Activated CD4-positive, alpha-beta T cell treated with anti-CD3 and anti-CD28 coated beads, Interleukin-2, amount 10 ng/mL, durations not matched to agents 24 days and 14 days (primary cell): ENCODE measurements at regions of chr7 and their contacts with region 1.

Region 1: GRCh38 chr7:100586266-100587025 is at the start of gene FBXO24:
- DNase-seq: peak; percentile 100
- H3K4me3 Mint-ChIP-seq: peak within 1 kb of the TSS; percentile 91
- H3K27ac Mint-ChIP-seq: peak within 1 kb of the TSS; percentile 96
- H3K4me1 Mint-ChIP-seq: peaks cover 30% of the 10 kb centered on the region
- H3K27me3 Mint-ChIP-seq: peaks cover 6% of the 10 kb centered on the region
- total RNA-seq, gene FBXO24: 0.38 and 0.42 TPM in 2 replicates

Region 2: DNA sequence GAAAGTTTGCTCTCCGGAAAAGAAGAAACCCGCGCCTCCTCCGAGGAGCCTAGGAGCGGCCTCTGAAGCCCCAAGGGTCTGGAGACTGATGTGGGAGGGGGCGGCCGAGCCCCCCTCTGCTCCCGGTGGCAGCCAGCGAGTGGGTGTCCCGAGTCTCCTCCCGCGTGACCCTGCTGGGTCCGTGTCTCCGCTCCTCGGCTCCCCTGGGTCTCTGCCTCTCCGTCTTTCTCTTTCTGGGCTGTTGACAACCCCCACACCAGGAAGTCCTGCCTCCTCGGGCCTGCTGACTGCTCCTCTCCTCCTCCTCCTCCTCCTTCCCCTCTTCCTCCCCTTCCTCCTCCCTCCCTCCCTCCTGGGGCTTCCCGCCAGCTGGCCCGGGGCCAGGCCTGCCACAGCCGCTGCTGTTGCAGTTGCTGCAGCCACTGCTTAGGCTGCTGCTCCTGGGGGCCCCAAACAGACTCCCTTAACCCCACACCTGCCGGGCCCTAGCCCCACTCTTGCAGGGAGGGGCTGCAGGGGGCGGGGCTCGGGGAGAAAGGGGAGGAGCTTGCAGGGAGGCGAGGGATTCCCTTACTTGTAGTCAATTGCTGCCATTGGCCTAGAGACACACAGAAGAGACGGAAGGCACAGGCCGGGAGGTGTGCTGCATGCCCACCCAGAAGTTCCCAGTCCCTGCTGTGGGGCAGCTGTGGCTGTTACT is 107.3 kb before region 1 on chr7 and contains the start of gene TSC22D4:
- intact Hi-C with region 1: loop called (anchors 1 kb)
- DNase-seq: peak; percentile 96
- H3K4me3 Mint-ChIP-seq: peak within 1 kb of the TSS; percentile 92
- H3K27ac Mint-ChIP-seq: peak within 1 kb of the TSS; percentile 88
- H3K4me1 Mint-ChIP-seq: peaks cover 35% of the 10 kb centered on the region
- H3K27me3 Mint-ChIP-seq: no peaks in the 10 kb centered on the region
- total RNA-seq, gene TSC22D4: 113 and 121 TPM in 2 replicates

Region 3: DNA sequence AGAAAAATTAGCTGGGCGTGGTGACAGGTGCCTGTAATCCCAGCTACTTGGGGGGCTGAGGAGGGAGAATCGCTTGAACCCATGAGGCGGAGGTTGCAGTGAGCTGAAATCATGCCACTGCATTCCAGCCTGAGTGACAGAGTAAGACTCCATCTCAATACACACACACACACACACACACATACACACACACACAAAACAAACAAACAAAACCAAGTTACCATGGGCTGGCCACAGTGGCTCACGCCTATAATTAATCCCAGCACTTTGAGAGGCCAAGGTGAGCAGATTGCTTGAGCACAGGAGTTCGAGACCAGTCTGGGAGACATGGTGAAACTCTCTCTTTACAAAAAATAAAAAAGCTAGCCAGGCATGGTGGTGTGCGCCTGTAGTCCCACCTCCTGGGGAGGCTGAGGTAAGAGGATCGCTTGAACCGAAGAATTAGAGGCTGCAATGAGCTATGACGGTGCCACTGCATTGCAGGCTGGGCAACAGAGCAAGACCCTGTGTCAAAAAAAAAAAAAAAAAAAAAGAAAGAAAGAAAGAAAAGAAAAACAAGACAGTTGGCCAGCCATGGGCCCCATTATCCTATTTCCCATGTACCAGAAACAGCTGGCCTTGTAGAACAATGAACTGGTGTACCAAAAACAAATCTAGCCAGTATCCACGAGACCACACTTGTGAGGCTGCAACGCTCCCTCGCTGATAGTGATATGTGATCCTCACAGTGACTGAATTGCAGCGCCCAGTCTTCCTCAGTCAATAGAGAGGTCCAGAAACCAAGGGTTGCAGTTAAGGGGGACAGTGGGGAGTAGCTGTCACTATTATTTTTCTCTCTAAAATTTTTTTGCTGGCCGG is 54.1 kb before region 1 on chr7:
- intact Hi-C with region 1: no loop called
- DNase-seq: no peak
- H3K4me3 Mint-ChIP-seq: no peak overlapping the region
- H3K27ac Mint-ChIP-seq: no peak overlapping the region
- H3K4me1 Mint-ChIP-seq: peaks cover 2% of the 10 kb centered on the region
- H3K27me3 Mint-ChIP-seq: no peaks in the 10 kb centered on the region

Region 4: DNA sequence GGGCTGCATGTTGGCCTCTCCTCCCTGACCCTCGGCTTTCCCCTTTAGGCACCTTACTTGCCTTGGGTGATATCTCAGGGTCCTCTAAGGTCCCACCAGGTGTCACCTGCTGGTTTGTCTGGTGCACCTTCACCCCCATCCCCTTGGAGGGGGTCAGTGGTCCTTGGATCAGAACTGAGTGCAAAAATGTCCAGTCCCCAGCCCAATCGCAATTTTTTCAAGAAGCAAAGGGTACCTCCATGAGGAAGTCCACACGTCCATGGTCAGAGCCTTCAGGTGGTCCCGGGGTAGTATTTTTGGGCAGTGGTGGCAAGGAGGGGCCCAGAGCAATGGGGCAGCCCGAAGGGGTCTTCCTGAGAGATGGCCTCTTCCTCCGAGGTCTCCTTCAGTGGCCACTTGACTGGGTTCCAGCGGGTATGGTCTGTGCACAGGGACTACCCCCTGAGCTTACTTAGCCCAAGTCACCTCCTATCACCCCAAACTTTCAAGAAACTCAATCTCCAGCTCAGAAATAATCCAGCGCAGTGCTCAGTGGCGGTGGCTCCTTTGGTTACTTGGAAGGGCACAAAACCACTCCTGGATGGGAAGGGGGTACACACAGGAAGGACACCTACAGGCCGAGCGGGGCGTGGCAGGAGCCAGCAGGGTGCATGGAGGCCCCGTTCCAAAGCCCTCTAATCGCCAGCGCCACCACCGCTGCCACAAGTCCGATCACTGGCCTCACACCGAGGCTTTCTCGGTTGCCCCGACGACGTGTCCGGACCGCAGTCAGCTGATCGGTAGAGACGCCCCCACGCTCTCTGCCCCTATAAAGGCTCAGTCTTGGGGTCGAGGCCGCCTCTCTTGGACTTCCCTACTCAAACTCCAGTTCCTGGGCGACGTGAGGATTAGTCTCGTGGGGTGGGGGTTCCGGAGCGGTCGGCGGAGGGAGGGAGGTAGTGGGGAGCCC is 17.3 kb before region 1 on chr7:
- intact Hi-C with region 1: loop called (anchors 2 kb)
- DNase-seq: peak; percentile 81
- H3K4me3 Mint-ChIP-seq: peak overlapping the region; percentile 24
- H3K27ac Mint-ChIP-seq: no peak overlapping the region
- H3K4me1 Mint-ChIP-seq: peaks cover 19% of the 10 kb centered on the region
- H3K27me3 Mint-ChIP-seq: peaks cover 3% of the 10 kb centered on the region

Region 5: DNA sequence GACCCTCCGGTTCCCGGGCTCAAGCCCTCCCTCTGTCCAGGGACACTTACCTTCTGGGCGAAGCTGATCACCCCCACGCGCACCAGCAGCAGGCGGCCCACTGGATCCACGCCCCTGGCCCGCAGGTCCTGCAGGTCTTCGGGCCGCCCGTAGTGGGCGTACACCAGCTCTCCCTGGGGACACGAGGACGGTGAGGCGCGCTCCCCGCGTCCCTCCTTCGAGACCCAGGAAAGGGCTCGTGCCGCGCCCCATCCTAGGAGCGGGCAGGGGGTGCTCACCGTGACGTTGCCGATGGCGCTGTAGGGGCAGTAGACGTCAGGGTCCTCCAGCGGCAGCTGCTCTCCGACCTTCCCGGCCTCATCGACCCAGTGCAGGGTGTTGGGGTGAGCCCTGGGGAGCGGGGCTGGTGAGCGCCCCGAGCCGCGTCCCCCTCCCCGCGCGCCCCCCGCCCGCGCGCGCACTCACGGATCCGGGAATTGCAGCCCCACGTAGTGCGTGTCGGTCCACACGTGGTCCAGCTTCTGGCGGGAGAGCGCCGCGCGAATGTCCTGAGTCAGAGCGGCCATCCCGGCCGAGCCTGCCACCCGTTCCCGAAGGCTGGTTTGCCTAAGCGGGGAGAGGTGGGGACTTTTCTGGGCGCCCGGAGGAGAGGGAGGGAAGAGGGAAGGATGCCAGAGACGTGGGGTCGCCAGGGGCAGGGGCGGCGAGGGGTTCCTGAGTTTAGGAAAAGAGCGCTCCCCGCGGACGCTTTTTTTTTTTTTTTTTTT is 46.7 kb after region 1 on chr7:
- intact Hi-C with region 1: loop called (anchors 2 kb)
- DNase-seq: peak; percentile 90
- H3K4me3 Mint-ChIP-seq: peak overlapping the region; percentile 92
- H3K27ac Mint-ChIP-seq: peak overlapping the region; percentile 98
- H3K4me1 Mint-ChIP-seq: peaks cover 32% of the 10 kb centered on the region
- H3K27me3 Mint-ChIP-seq: no peaks in the 10 kb centered on the region

Region 6: DNA sequence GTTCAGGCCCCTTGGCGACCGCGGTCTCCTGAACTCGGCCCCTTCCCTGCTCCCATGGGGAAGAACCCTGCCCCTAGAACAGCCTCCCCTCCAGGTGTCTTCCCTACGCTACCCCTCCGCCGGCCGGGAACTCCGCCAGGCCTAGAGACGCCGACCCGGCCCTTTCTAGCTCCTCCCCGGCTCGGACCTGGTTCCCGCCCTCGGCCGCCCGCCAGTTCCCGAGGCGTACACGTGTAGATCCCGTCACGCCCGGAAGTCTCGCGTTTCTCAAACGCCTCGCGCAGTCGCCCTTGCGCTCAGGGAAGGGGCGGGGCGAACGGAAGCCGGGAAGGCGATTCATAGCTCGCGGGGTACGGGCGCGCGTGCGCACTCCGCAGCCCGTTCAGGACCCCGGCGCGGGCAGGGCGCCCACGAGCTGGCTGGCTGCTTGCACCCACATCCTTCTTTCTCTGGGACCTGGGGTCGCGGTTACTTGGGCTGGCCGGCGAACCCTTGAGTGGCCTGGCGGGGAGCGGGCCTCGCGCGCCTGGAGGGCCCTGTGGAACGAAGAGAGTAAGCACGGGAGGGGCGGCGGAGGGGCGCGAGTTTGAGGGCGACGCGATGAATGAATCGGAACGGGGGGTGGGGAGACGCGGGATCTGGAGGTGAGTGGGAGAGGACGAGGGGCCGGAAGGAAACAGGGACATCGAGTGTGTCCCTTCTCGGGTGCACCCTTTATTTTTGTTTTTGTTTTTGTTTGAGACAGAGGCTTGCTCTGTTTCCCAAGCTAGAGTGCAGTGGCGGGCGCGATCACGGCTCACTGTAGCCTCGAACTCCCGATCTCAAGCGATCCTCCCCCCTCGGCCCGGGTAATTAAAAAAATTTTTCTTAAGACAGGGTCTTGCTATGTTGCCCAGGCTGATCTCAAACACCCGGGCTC is 119.6 kb after region 1 on chr7 and contains the start of gene POP7:
- intact Hi-C with region 1: loop called (anchors 1 kb)
- DNase-seq: peak; percentile 100
- H3K4me3 Mint-ChIP-seq: peak within 1 kb of the TSS; percentile 99
- H3K27ac Mint-ChIP-seq: peak within 1 kb of the TSS; percentile 98
- H3K4me1 Mint-ChIP-seq: peaks cover 13% of the 10 kb centered on the region
- H3K27me3 Mint-ChIP-seq: peaks cover 7% of the 10 kb centered on the region
- total RNA-seq, gene POP7: 77.3 and 77.7 TPM in 2 replicates